CD8-positive, alpha-beta T cell (primary cell): ENCODE measurements at regions of chr15 and their contacts with region 1.

Region 1: DNA sequence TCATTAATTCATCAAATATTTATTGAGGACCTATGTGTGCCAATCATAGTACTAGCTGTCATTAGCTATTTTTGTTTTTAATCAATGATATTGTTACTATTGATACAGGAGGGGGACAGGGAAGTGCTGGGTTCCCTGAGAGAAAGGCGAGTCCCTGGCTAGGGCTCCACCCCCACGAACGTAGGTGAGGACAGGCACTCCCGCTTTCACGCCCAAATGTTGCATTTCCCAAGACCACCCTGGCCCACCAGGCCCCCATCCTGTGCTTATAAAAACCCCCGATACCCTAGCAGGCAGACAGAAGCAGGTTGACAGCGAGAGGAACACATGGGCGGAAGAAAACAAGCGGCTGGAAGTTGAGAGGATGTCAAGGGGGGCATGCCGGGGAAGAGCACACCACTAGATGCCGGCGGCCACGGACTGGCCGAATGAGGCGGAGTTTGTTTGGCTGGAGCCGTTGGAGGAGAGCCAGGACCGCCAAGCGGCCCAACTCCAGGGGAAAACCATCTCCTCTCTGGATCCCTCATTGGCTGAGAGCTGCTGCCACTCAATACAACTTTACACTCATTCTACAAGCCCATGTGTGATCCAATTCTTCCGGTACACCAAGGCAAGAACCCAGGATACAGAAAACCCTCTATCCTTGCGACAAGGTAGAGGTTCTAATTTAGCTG is 798.7 kb upstream of the SEMA6D start:
- DNase-seq: no peak
- ATAC-seq: no peak
- H3K4me3 ChIP-seq: no peak overlapping the region
- H3K4me3 Mint-ChIP-seq: no peak overlapping the region
- H3K27ac ChIP-seq: no peak overlapping the region
- H3K27ac Mint-ChIP-seq: no peak overlapping the region
- H3K4me1 ChIP-seq: no peaks in the 10 kb centered on the region
- H3K4me1 Mint-ChIP-seq: no peaks in the 10 kb centered on the region
- H3K27me3 ChIP-seq: no peaks in the 10 kb centered on the region
- H3K27me3 Mint-ChIP-seq: no peaks in the 10 kb centered on the region
- CTCF ChIP-seq: no peak

Region 2: GRCh38 chr15:46676233-46677206 is 242.1 kb before region 1 on chr15:
- CTCF ChIA-PET with region 1: no interaction called
- POLR2A ChIA-PET with region 1: no interaction called
- intact Hi-C with region 1: no loop called
- DNase-seq: no peak
- ATAC-seq: no peak
- H3K4me3 ChIP-seq: no peak overlapping the region
- H3K4me3 Mint-ChIP-seq: no peak overlapping the region
- H3K27ac ChIP-seq: no peak overlapping the region
- H3K27ac Mint-ChIP-seq: no peak overlapping the region
- H3K4me1 ChIP-seq: no peaks in the 10 kb centered on the region
- H3K4me1 Mint-ChIP-seq: no peaks in the 10 kb centered on the region
- H3K27me3 ChIP-seq: no peaks in the 10 kb centered on the region
- H3K27me3 Mint-ChIP-seq: no peaks in the 10 kb centered on the region
- CTCF ChIP-seq: no peak

Region 3: GRCh38 chr15:46856839-46857502 is 61.6 kb before region 1 on chr15:
- CTCF ChIA-PET with region 1: no interaction called
- POLR2A ChIA-PET with region 1: no interaction called
- intact Hi-C with region 1: loop called in 1 of 2 experiments (anchors 5 kb)
- DNase-seq: no peak
- ATAC-seq: no peak
- H3K4me3 ChIP-seq: no peak overlapping the region
- H3K4me3 Mint-ChIP-seq: no peak overlapping the region
- H3K27ac ChIP-seq: no peak overlapping the region
- H3K27ac Mint-ChIP-seq: no peak overlapping the region
- H3K4me1 ChIP-seq: no peaks in the 10 kb centered on the region
- H3K4me1 Mint-ChIP-seq: no peaks in the 10 kb centered on the region
- H3K27me3 ChIP-seq: no peaks in the 10 kb centered on the region
- H3K27me3 Mint-ChIP-seq: no peaks in the 10 kb centered on the region
- CTCF ChIP-seq: no peak

Region 4: DNA sequence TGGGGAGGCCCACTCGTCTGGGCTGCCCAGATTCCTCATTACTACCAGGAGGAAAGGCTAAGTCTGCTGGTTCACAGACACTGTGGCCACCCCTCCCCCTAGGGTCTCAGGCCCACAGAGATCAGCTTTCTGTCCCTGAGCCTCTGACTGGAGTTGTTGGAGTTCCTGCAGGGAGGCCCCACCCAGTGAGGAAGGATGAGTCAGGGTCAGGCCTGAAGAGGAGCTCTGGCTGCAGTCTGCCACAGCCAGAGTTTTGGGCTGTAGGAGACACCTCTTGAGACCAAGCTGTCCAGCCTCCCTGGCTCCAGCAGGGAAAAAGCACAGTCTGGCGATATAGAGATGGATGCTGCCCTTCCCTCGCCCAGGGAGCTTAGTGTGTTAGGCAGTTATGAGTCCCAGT is 77.8 kb after region 1 on chr15:
- CTCF ChIA-PET with region 1: no interaction called
- POLR2A ChIA-PET with region 1: no interaction called
- intact Hi-C with region 1: no loop called
- DNase-seq: no peak
- ATAC-seq: no peak
- H3K4me3 ChIP-seq: no peak overlapping the region
- H3K4me3 Mint-ChIP-seq: no peak overlapping the region
- H3K27ac ChIP-seq: no peak overlapping the region
- H3K27ac Mint-ChIP-seq: no peak overlapping the region
- H3K4me1 ChIP-seq: no peaks in the 10 kb centered on the region
- H3K4me1 Mint-ChIP-seq: no peaks in the 10 kb centered on the region
- H3K27me3 ChIP-seq: no peaks in the 10 kb centered on the region
- H3K27me3 Mint-ChIP-seq: no peaks in the 10 kb centered on the region
- CTCF ChIP-seq: no peak